ENCODE measurements at regions of chrX and their contacts with region 1.

Region 1: DNA sequence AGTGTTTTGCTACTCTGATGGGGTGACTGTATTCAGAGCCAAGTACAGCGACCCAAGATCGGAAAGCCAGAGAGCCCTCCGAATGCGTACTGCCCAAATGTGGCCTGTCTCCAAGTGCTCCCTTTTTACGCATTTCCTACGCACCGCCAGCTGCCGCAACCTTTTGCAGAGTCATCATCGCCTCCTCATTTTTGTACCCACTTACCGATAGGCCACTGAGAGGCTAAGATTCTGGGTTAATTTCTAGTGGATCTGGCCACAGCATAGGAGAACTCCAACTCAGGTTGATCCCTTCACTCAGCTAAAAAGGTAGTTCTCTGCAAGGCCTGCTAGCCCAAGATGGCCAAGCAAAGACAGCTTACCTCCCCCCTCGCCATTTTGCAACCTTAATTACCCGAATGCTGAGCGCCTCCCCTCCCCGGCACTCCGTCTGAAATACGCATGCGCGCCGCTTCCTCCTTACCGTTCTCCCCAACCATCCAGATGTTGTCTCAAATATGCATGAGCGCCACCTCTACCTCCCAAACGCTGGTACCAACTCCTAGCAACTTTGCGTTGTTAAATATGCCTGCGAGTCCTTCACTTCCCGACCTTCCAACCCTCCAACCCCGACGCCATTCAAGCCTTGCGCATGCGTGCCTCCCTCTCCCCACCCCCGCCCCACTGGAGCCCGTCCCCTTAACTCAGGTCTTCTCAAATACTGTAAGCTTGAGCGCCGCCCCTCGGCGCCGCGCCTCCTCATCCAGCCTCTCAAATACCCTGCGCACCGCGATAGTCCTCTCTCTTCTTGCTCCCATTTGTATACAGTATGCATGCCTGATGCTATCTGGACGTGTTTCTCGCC is 11.8 kb upstream of the ZCCHC13 start:
- DNase-seq: peak; percentile 95
- ATAC-seq: peak; percentile 97

Region 2: DNA sequence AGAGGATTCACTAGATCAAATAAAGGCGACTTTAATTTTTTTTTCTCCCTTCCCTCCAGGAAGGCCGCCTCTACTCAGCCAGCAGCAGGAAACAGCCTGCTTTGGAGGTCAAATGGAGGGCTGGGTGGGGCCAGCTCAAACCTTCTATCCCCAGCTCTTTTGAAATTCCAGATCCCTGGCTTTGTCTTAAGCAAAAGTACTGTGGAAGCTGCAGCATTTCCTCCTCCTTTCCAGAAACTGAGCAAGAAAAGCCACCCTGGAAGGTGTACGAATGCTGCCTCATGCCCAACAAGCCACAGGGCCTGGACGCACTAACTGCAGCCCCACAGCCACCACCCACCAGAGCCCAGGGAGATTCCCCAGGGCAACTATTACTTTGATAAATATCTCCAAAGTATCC is 43.3 kb before region 1 on chrX:
- intact Hi-C with region 1: loop called (anchors 5 kb)
- DNase-seq: no peak
- ATAC-seq: peak; percentile 54

Measured in Right ventricle myocardium inferior (tissue), 1 donor.